ENCODE measurements at regions of chr7 and their contacts with region 1.

Region 1: DNA sequence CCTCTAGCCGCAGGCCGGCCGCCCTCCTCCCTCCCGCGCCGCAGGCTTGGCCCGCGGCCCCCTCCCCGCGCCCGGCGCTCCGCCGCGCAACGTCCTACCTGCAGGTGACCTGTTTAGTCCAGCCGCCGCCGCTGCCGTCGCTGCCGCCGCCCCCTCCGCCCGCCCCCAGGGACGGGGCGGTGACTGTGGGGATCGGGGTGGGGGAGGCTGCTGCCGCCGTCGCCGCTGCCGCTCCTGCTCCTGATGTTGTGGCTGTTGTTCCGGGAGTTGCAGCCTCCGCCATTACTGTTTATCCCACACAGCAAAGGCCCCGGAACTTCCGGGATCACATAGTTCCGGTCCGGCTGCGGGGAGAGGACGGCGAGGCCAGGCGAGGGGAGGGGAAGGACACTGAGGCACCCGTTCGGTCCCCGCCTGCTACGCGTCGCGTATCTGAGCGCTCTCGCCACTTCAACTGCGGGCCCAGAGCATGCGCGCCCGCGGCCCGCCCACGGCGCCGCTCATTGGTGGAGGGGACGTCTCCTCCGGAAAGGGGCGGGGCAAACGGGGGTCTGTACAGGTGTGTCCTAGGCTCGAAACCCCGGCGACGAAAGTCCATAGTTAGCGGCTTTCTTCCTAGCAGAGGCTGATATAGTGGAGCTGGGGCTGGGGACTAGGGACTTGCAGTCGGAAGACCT is at the start of gene MKRN1:
- DNase-seq: peak; percentile 99 to 100 (median 100)
- ATAC-seq: peak; percentile 94
- H3K4me3 ChIP-seq: peak within 1 kb of the TSS; percentile 93
- H3K27ac ChIP-seq: peak within 1 kb of the TSS; percentile 91
- H3K4me1 ChIP-seq: peaks cover 12 to 35% of the 10 kb centered on the region in 2 experiments
- H3K27me3 ChIP-seq: no peaks in the 10 kb centered on the region
- CTCF ChIP-seq: no peak; a peak in 1 of 6 replicates
- EP300 ChIP-seq: no peak
- POLR2A ChIP-seq: peak; percentile 94
- RAD21 ChIP-seq: no peak; a peak in 1 of 4 replicates
- polyA plus RNA-seq, gene MKRN1: 30.5 to 33.5 TPM

Region 2: DNA sequence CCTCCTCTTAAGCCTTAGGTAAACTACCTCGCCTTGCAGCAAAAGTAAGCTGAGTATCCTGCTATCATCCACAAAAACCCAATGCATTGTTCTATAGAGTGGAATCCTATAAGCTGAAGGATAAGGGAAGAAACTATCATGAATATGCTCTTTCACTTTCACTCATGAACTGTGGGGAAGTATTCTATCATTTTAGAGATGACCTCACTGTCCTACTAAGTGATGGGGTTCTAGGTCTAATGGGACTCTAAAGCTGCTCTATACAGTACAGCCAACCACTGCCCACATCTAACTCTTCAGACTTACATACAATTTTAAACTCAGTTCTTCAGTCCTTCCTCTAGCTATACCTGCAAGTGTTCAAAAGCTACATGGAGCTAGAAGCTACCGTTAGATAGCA is 16.1 kb before region 1 on chr7:
- CTCF ChIA-PET with region 1: no interaction called
- POLR2A ChIA-PET with region 1: interaction called, 18 read pairs
- in situ Hi-C with region 1: no loop called
- intact Hi-C with region 1: no loop called
- DNase-seq: no peak
- ATAC-seq: no peak; the same call in 2 of the 3 replicates
- H3K4me3 ChIP-seq: no peak overlapping the region
- H3K27ac ChIP-seq: no peak overlapping the region
- H3K4me1 ChIP-seq: no peaks in the 10 kb centered on the region
- H3K27me3 ChIP-seq: no peaks in the 10 kb centered on the region
- CTCF ChIP-seq: no peak
- EP300 ChIP-seq: no peak
- POLR2A ChIP-seq: no peak
- RAD21 ChIP-seq: no peak

Region 3: GRCh38 chr7:140494867-140495266 is 15.7 kb after region 1 on chr7:
- CTCF ChIA-PET with region 1: interaction called, 26 read pairs
- POLR2A ChIA-PET with region 1: interaction called, 44 read pairs
- in situ Hi-C with region 1: no loop called
- intact Hi-C with region 1: loop called (anchors 1 kb)
- DNase-seq: no peak
- ATAC-seq: no peak
- H3K4me3 ChIP-seq: no peak overlapping the region
- H3K27ac ChIP-seq: no peak overlapping the region
- H3K4me1 ChIP-seq: peaks cover 4 to 8% of the 10 kb centered on the region in 2 experiments; a peak in 4 of 5 replicates
- H3K27me3 ChIP-seq: no peaks in the 10 kb centered on the region
- CTCF ChIP-seq: no peak
- EP300 ChIP-seq: no peak
- POLR2A ChIP-seq: no peak
- RAD21 ChIP-seq: no peak

Region 4: GRCh38 chr7:140596519-140597427 is 117.6 kb after region 1 on chr7:
- CTCF ChIA-PET with region 1: no interaction called
- POLR2A ChIA-PET with region 1: interaction called, 3 read pairs
- in situ Hi-C with region 1: no loop called
- intact Hi-C with region 1: loop called (anchors 5 kb)
- DNase-seq: no peak
- ATAC-seq: no peak
- H3K4me3 ChIP-seq: no peak overlapping the region
- H3K27ac ChIP-seq: no peak overlapping the region
- H3K4me1 ChIP-seq: no peaks in the 10 kb centered on the region
- H3K27me3 ChIP-seq: peaks cover 46 to 57% of the 10 kb centered on the region in 2 experiments
- CTCF ChIP-seq: no peak
- EP300 ChIP-seq: no peak
- POLR2A ChIP-seq: no peak
- RAD21 ChIP-seq: no peak

Region 5: GRCh38 chr7:140653319-140654108 is 174.3 kb after region 1 on chr7:
- CTCF ChIA-PET with region 1: interaction called, 31 read pairs
- POLR2A ChIA-PET with region 1: interaction called, 4 read pairs
- in situ Hi-C with region 1: no loop called
- intact Hi-C with region 1: loop called (anchors 1 kb)
- DNase-seq: peak; percentile 77 to 84 (median 81)
- ATAC-seq: peak; percentile 83
- H3K4me3 ChIP-seq: no peak overlapping the region
- H3K27ac ChIP-seq: no peak overlapping the region
- H3K4me1 ChIP-seq: no peaks in the 10 kb centered on the region; a peak in 2 of 5 replicates
- H3K27me3 ChIP-seq: peaks cover 50 to 84% of the 10 kb centered on the region in 2 experiments; a peak in 4 of 5 replicates
- CTCF ChIP-seq: peak; percentile 87 to 98 (median 96)
- EP300 ChIP-seq: 0 out of 2 replicates have a peak, but pooled peaks have one; percentile 9
- POLR2A ChIP-seq: no peak
- RAD21 ChIP-seq: peak; percentile 95 to 96

Region 6: DNA sequence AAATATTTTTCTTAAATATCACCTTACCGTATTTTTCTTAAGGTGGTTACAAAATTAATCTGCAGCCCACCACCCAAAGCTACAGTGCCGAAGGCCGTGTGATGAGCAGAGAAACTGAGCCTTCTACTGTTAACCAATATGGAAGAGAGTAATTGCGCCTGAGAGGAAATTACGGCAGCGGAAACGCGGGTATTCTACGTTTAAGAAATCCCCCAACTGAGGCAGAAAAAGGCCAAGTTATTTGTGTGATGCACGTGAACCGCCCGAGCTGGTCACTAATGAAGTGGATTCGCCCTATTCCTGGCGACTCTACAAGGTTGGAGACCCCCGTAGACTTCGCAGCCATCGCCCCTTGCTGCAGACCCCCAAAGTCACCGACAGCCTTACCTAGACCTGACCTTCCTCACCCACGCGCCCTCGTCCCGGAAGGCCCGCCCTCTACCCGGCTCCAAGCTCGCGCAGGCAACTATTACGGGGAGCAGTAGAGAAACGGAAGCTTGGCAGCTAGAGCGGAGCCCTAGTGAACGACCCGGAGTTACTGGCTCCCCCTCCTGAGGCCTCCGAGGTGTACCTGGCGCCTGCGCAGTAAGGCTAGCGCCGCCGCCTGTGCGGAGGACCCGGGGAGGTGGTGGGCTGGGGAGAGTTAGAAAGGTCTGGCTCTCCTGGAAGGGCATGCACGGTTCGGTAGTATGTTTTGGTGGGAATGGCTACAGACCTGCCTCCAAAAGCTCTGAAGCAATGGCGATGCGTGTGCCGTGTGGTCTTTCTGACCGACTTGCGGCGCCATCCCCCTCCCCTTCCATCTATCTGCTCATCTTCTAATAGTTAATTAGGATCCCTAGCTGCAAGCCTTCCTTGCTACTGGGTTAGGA is 535.6 kb after region 1 on chr7 and contains the start of gene MRPS33:
- CTCF ChIA-PET with region 1: no interaction called
- POLR2A ChIA-PET with region 1: no interaction called
- in situ Hi-C with region 1: no loop called
- intact Hi-C with region 1: loop called (anchors 5 kb)
- DNase-seq: peak; percentile 99
- ATAC-seq: peak; percentile 99
- H3K4me3 ChIP-seq: peak within 1 kb of the TSS; percentile 53
- H3K27ac ChIP-seq: peak within 1 kb of the TSS; percentile 80
- H3K4me1 ChIP-seq: peaks cover 8 to 21% of the 10 kb centered on the region in 2 experiments; a peak in 2 of 5 replicates
- H3K27me3 ChIP-seq: peaks cover 0 to 2% of the 10 kb centered on the region in 2 experiments; a peak in 1 of 5 replicates
- CTCF ChIP-seq: peak; percentile 92 to 96 (median 96)
- EP300 ChIP-seq: peak; percentile 72
- POLR2A ChIP-seq: peak; percentile 99
- RAD21 ChIP-seq: peak in 1 of 2 experiments; percentile 24; a peak in 1 of 4 replicates
- polyA plus RNA-seq, gene MRPS33: 395 to 442 TPM

Measured in K562 (cell line).